IMR-90 (cell line): ENCODE measurements at regions of chr5 and their contacts with region 1.

Region 1: DNA sequence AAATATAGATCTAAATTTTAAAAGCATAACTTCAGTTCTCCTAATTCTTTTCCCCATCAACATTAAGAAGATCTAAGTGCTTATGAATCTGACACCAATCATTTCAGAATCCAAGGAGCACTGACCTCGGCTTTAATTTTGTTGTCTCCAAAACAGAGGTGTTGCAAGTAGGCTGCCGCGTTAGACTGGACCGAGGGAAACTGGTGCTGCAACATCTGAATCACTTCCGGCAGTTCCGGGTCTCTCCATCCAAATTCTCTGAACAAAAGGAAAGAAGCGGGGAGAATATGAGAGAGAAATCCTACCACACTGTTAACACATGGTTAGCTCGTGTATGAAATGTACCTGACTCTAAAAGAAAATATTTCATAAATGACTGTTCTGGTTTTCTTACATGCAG is 475.5 kb upstream of the DAP start:
- DNase-seq: no peak
- ATAC-seq: no peak
- H3K4me3 ChIP-seq: no peak overlapping the region
- H3K27ac ChIP-seq: no peak overlapping the region
- H3K4me1 ChIP-seq: no peaks in the 10 kb centered on the region
- H3K27me3 ChIP-seq: no peaks in the 10 kb centered on the region
- CTCF ChIP-seq: no peak
- POLR2A ChIP-seq: no peak
- RAD21 ChIP-seq: no peak

Region 2: DNA sequence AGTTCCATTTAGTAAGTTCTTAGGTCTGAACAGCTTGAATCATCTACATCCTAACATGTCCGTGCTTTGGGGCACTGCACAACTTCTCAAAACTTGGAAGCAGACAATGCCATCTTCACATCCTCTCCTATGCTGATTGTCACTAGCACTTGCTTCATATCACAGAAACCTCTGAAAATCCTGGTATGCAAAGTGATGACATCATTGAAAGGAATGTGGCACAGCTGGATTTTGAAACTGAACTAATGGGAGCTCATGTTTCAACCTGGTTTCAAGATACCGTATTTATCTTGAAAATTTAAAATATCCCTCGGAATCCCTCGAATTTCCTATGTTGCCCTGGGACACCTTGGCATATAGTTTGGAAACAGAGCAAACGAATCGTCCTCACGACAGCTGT is 14.7 kb after region 1 on chr5:
- CTCF ChIA-PET with region 1: no interaction called
- POLR2A ChIA-PET with region 1: no interaction called
- dilution Hi-C with region 1: no loop called
- in situ Hi-C with region 1: no loop called
- intact Hi-C with region 1: no loop called
- DNase-seq: peak; percentile 21
- ATAC-seq: no peak
- H3K4me3 ChIP-seq: no peak overlapping the region
- H3K27ac ChIP-seq: no peak overlapping the region
- H3K4me1 ChIP-seq: peaks cover 3% of the 10 kb centered on the region; the same call in 1 of the 2 replicates
- H3K27me3 ChIP-seq: no peaks in the 10 kb centered on the region
- CTCF ChIP-seq: no peak
- POLR2A ChIP-seq: no peak
- RAD21 ChIP-seq: no peak

Region 3: DNA sequence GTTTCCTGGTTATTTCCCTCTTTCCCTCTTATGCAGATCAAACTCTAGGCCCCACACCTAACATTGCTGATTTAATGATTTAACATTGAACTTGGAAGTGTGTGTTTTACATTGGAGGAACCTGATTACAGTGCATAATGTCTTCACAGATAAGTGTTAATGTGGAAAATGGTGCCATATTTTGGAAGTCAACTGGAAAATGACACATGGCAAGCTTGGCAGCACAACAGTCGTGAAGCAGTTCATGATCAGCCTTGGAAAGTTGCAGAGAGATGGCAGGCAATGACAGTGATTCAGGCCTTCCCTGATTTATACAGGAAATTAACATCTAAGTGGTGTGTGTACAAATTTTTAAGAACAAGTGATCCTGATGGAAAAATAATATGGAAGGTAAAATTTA is 747.6 kb after region 1 on chr5:
- CTCF ChIA-PET with region 1: no interaction called
- POLR2A ChIA-PET with region 1: interaction called, 10 read pairs
- dilution Hi-C with region 1: no loop called
- in situ Hi-C with region 1: no loop called
- intact Hi-C with region 1: no loop called
- DNase-seq: no peak
- ATAC-seq: no peak
- H3K4me3 ChIP-seq: no peak overlapping the region
- H3K27ac ChIP-seq: no peak overlapping the region
- H3K4me1 ChIP-seq: no peaks in the 10 kb centered on the region
- H3K27me3 ChIP-seq: no peaks in the 10 kb centered on the region
- CTCF ChIP-seq: no peak
- POLR2A ChIP-seq: no peak
- RAD21 ChIP-seq: no peak